ENCODE measurements at regions of chr7 and their contacts with region 1.

Region 1: GRCh38 chr7:151123822-151124464 is 37.7 kb downstream of the AGAP3 start:
- DNase-seq: peak; percentile 66
- H3K4me3 ChIP-seq: no peak overlapping the region
- H3K27ac ChIP-seq: no peak overlapping the region
- H3K4me1 ChIP-seq: no peaks in the 10 kb centered on the region
- H3K27me3 ChIP-seq: no peaks in the 10 kb centered on the region
- CTCF ChIP-seq: peak; percentile 99

Region 2: DNA sequence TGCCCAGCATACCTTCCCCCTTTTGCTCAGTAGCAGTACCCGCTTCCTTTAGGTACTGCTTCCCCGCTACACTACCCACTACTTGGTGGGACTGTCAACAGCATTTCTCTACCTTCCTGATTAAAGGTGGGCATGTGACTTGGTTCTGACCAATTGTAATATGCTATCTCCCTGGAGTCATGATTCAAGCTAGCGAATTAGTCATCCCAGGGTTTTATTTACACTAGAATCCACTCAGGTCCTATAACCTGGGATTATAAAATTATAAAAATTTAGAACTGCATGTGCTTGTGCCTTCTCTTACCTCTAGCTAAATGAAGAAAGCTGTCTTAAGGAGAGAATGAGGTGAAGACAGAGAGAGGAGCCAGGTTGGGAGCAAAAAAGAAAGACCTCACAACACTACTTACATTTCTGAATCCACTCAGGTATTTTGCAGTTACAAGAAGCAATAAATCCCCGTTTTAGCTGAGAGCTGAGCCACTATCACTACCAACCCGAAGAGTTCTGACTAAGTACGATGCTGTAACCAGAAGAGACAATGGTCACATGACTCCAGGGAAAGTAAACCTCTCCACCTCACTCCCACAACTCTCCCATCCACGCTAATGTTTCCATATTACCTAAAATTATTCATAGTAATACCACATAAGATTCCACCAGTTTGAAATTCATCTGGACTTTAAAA is 33.8 kb after region 1 on chr7:
- CTCF ChIA-PET with region 1: no interaction called
- dilution Hi-C with region 1: no loop called
- in situ Hi-C with region 1: loop called in 1 of 2 experiments (anchors 5 kb)
- intact Hi-C with region 1: no loop called
- DNase-seq: no peak
- H3K4me3 ChIP-seq: no peak overlapping the region
- H3K27ac ChIP-seq: no peak overlapping the region
- H3K4me1 ChIP-seq: no peaks in the 10 kb centered on the region
- H3K27me3 ChIP-seq: no peaks in the 10 kb centered on the region
- CTCF ChIP-seq: no peak

Region 3: GRCh38 chr7:151599401-151600227 is 475.7 kb after region 1 on chr7:
- CTCF ChIA-PET with region 1: no interaction called
- dilution Hi-C with region 1: no loop called
- in situ Hi-C with region 1: no loop called
- intact Hi-C with region 1: no loop called
- DNase-seq: peak; percentile 69
- H3K4me3 ChIP-seq: no peak overlapping the region
- H3K27ac ChIP-seq: peak overlapping the region; percentile 92
- H3K4me1 ChIP-seq: peaks cover 56% of the 10 kb centered on the region
- H3K27me3 ChIP-seq: no peaks in the 10 kb centered on the region
- CTCF ChIP-seq: no peak